Mucosa of descending colon (tissue), 3 donors: ENCODE measurements at regions of chr18 and their contacts with region 1.

Region 1: GRCh38 chr18:34592961-34593382 is 117.1 kb upstream of the DTNA start:
- DNase-seq: peak in 2 of 3 donors; percentile 12 to 25
- ATAC-seq: peak; percentile 62
- H3K4me3 ChIP-seq: no peak overlapping the region
- H3K4me1 ChIP-seq: no peaks in the 10 kb centered on the region
- CTCF ChIP-seq: no peak

Region 2: DNA sequence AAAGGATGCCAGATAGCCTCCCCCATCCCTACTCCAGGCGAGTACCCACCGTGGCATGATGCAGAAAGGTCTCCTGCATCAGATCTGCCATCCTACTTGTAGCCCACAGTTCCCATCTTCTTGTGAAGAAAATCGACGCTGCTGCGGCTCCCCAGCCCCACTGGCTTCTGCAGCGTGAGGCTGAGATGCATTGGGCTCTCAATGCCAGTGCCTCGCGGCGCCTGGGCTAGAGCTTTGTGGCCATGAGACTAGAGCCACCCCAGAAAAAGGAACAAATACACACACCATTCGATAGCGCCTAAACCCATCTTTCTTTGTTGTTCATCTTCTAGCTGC is 371.0 kb before region 1 on chr18:
- intact Hi-C with region 1: no loop called
- DNase-seq: peak; percentile 4 to 25 (median 16)
- ATAC-seq: no peak
- H3K4me3 ChIP-seq: no peak overlapping the region
- H3K4me1 ChIP-seq: peaks cover 22% of the 10 kb centered on the region
- CTCF ChIP-seq: no peak

Region 3: DNA sequence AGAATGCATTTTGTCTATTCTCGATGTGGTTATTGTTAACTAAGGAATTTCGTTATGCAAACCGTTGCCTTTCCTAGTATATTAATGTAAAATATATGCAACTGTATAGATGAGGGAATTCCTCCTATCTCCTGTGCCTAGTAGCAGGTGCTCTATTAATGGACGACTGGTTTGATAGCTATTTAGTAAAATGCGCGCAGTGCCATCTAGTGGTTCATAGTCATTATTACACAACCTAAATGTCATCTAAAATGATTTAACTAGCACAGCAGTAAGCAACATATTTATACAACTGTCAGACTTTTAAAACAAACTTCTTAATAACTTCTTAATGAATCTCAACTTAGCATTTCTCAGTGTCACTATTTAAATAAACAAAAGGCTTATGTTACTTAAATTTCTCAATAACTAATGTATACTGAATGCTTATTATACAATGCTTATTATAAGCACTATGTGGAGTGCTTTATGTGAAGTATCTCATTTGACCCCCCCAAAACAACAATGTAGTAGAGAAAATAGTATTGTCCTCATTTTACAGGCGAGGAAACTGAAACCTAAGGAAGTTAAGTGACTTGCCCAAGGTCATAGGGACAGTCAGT is 195.1 kb after region 1 on chr18:
- intact Hi-C with region 1: loop called in 1 of 2 experiments (anchors 10 kb)
- DNase-seq: peak in 1 of 3 donors; percentile 69
- ATAC-seq: peak; percentile 81
- H3K4me3 ChIP-seq: no peak overlapping the region
- H3K4me1 ChIP-seq: no peaks in the 10 kb centered on the region
- CTCF ChIP-seq: peak; percentile 37